ENCODE measurements at regions of chr6 and their contacts with region 1.

Region 1: DNA sequence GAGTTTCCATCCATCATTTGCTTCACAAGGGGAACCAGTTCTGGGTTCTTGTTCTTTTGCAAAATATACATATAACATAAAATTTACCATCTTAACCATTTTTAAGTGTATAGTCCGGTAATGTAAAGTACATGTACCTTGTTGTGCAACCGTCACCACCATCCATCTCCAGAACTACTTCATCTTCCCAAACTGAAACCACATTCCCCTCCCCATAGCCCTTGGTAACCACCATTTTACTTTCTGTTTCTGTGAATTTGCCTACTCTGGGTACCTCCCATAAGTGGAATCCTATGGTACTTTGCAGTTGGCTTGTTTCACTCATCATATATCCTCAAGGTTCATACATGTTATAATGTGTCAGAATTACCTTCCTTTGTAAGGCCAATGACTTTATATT is 70.3 kb upstream of the DSP start:
- DNase-seq: no peak

Region 2: DNA sequence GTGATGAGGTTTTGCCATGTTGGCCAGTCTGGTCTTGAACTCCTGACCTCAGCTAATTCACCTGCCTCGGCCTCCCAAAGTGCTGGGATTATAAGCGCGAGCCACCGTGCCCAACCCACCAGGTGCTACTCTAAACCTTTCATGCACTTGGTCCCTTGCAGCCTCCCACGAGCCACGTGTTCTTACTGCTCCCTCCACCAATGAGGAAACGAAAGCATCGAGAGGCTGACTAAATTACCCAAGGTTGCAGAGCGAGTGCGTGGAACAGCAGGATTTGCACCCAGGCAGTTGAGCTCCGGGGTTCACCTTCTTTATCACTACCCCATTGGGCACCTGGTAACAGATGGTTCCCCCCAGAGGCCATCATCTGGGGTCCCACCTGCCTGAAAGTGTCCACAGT is 674.4 kb before region 1 on chr6:
- CTCF ChIA-PET with region 1: interaction called, 12 read pairs
- POLR2A ChIA-PET with region 1: no interaction called
- DNase-seq: no peak